Activated T-helper 2 cell treated with anti-CD3 and anti-CD28 coated beads, Interferon-gamma antibody, Interleukin-2, Interleukin-4, amounts not matched to agents 10 μg/mL and 5 μg/mL and 100 μg/mL, durations not matched to agents 14 hours and 24 hours and 36 hours (primary cell): ENCODE measurements at regions of chr1 and their contacts with region 1.

Region 1: GRCh38 chr1:73998348-73998959 is 199.5 kb downstream of the LRRIQ3 start:
- DNase-seq: no peak
- H3K4me3 Mint-ChIP-seq: no peak overlapping the region
- H3K27ac Mint-ChIP-seq: no peak overlapping the region
- H3K4me1 Mint-ChIP-seq: no peaks in the 10 kb centered on the region
- H3K27me3 Mint-ChIP-seq: no peaks in the 10 kb centered on the region

Region 2: DNA sequence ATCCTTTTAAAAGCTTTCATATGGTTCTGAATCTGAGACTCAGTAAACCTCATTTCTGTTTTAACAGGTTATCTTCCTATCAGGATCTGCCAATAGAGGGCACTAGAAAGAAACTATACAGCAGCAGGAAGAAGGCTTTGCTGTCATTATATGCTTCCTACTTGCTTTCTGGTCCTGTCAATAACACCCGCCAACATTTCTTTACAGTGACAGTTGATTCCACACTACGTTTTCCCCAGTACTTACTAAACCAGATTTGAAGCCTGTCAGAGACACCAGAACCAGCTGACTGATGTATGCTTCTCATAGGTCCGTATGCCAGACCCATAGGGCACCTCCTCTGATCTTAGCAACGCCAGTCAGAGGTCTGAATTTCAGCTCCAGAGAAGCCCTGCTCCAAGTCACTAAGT is 1375.2 kb before region 1 on chr1:
- intact Hi-C with region 1: loop called (anchors 5 kb)
- DNase-seq: no peak
- H3K4me3 Mint-ChIP-seq: no peak overlapping the region
- H3K27ac Mint-ChIP-seq: no peak overlapping the region
- H3K4me1 Mint-ChIP-seq: no peaks in the 10 kb centered on the region
- H3K27me3 Mint-ChIP-seq: no peaks in the 10 kb centered on the region

Region 3: DNA sequence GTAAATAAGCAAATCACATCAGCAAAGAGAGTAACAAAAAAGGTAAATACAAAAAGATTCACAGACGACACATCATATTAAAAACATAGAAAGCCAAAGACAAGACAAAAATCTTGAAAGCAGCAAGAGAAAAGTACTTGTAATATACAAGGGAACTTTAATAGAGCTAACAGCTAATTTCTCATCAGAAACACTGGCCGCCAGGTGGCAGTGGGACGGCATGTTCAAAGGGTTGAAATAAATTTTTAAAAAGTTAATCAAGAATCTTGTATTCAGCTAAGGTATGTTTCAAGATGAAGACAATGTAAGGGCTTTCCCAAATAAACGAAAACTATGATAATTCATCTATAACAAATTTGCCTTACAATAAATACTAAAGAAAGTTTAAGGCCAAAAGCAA is 158.5 kb before region 1 on chr1:
- intact Hi-C with region 1: loop called (anchors 10 kb)
- DNase-seq: no peak
- H3K4me3 Mint-ChIP-seq: no peak overlapping the region
- H3K27ac Mint-ChIP-seq: no peak overlapping the region
- H3K4me1 Mint-ChIP-seq: no peaks in the 10 kb centered on the region
- H3K27me3 Mint-ChIP-seq: no peaks in the 10 kb centered on the region